ENCODE measurements at regions of chr2 and their contacts with region 1.

Region 1: GRCh38 chr2:170113171-170113894 is 64.6 kb upstream of the MYO3B start:
- DNase-seq: no peak
- H3K4me3 ChIP-seq: no peak overlapping the region
- H3K27ac ChIP-seq: no peak overlapping the region
- H3K4me1 ChIP-seq: no peaks in the 10 kb centered on the region
- H3K27me3 ChIP-seq: no peaks in the 10 kb centered on the region
- CTCF ChIP-seq: no peak

Region 2: GRCh38 chr2:169584005-169584877 is 529.1 kb before region 1 on chr2 and contains the start of gene PPIG:
- CTCF ChIA-PET with region 1: no interaction called
- POLR2A ChIA-PET with region 1: interaction called, 12 read pairs
- intact Hi-C with region 1: no loop called
- DNase-seq: peak; percentile 62 to 75
- H3K4me3 ChIP-seq: peak within 1 kb of the TSS; percentile 94
- H3K27ac ChIP-seq: peak within 1 kb of the TSS; percentile 81
- H3K4me1 ChIP-seq: peaks cover 10% of the 10 kb centered on the region
- H3K27me3 ChIP-seq: no peaks in the 10 kb centered on the region
- CTCF ChIP-seq: no peak
- total RNA-seq, gene PPIG: 28.4 and 34.0 TPM in 2 replicates